Stomach (tissue), 19 donors: ENCODE measurements at regions of chr13 and their contacts with region 1.

Region 1: DNA sequence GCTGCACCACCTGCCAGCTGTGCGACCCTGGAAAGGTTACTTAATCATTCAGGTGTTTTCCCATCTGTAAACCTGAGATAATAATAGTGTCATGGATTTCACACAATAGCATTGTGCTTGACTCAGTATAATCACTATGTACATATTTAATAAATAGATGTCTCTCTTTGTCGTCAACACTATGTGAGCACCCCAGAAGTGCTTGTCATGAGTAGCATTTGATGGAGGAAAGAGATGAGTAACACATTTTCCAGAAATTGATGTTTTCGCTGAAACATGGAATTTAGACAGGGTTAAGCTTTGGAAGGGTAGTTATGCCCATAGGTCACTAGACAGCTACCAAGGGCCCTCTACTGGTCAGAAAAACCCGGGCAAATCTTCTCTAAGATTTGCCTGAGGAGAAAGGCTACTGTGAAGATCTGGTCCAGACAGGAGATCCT is 9.5 kb upstream of the MBNL2 start:
- DNase-seq: peak in 1 of 2 donors; percentile 42
- H3K4me3 ChIP-seq: no peak overlapping the region
- H3K27ac ChIP-seq: no peak overlapping the region
- H3K4me1 ChIP-seq: peaks cover 0 to 16% (median 7%) of the 10 kb centered on the region in 4 donors
- H3K27me3 ChIP-seq: no peaks in the 10 kb centered on the region
- CTCF ChIP-seq: peak in 4 of 7 experiments; percentile 32 to 50 (median 44)
- EP300 ChIP-seq: no peak
- POLR2A ChIP-seq: no peak

Region 2: DNA sequence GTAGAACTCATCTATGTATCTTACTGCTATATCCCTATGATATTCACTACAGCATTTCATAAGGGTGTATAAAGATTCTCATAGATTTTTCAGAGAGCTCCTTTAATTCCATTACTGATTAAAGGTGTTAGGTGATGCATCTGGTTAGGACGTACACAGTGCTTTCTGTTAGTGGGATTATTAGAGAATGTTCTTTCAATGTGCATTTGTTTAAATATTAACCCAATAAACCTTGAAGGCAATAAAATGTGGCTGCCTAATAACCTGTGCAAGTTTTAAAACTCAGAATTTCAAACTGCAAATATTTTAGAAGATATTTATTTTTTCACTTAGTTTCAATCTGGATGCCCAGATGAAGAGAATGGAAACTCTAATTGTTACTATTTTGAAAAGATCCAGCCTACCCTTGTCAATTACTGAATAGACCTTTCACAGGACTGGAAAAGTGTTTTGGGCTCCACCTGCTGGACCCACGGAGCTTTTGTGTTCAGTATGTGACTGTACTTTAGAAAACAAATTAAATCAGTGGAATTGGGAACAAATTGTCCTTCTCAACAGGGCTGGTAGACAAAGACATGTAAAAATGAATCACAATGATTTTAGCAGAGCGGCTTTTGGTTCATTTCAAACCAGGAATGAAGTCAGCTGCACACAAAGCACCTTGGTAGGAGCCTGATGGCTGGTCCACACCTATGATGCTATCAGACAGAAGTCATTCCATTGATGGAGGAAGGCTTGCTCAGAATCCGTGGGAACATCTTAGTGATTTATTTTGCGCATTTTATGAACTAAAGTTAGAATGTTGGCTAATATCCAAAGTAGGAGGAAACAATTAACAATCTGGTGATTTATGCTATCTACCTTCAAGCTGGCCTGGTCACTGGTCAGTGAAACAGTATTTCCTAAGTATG is 131.9 kb after region 1 on chr13:
- intact Hi-C with region 1: loop called (anchors 10 kb)
- DNase-seq: peak; percentile 62 to 85
- H3K4me3 ChIP-seq: no peak overlapping the region
- H3K27ac ChIP-seq: peak overlapping the region in 3 of 5 donors; percentile 2 to 34 (median 34)
- H3K4me1 ChIP-seq: peaks cover 0 to 44% (median 26%) of the 10 kb centered on the region in 4 donors
- H3K27me3 ChIP-seq: no peaks in the 10 kb centered on the region
- CTCF ChIP-seq: peak in 5 of 7 experiments; percentile 46 to 70 (median 53)
- EP300 ChIP-seq: no peak
- POLR2A ChIP-seq: no peak